ENCODE measurements at regions of chr19 and their contacts with region 1.

Region 1: DNA sequence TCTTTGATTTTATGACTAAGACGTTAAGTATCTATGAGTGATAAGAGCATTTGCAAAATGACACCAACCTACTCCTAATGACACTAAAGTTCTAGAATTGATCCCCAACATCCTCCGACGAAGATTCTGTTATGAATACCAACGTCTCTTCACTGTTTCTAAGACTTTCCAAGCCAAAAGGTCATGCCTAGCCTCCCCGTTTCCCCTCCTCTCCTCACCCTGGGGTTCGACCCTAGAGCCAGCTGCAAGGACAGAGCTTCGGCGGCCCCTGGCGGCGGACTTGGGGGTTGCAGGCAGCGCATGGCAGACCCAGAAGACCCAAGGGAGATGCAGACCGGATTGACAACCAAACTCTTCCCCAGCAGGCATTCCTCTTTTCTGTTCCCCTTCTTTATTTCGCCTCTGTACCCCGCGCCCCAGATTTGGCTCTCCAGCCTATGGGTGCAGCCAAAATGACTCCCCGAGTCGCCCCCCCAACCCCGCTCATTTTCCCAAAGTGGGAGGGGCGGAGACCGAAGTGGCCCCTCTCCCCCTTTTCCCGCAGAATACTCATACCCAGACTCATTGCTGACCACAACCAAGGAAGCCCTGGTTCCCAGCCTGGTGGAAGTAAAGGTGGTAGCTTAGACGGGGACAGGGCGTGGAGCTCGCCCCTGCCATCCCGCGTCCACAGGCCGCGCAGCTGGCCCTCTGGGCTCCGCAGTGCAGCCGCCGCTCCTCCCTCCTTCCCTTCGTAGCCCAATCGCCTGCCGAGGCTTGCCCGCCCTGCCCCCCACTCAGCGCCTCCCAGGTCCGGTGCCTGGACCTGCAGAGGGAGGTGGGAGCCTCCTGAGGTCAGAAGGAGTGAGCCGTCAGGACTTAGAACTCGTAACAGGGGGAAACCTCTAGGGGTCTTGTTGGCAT is 4.1 kb upstream of the EML2 start:
- DNase-seq: peak; percentile 84 to 98 (median 93)

Region 2: GRCh38 chr19:45607071-45608029 is 35.9 kb before region 1 on chr19:
- intact Hi-C with region 1: loop called (anchors 1 kb)
- DNase-seq: peak; percentile 20 to 91 (median 64)

Region 3: DNA sequence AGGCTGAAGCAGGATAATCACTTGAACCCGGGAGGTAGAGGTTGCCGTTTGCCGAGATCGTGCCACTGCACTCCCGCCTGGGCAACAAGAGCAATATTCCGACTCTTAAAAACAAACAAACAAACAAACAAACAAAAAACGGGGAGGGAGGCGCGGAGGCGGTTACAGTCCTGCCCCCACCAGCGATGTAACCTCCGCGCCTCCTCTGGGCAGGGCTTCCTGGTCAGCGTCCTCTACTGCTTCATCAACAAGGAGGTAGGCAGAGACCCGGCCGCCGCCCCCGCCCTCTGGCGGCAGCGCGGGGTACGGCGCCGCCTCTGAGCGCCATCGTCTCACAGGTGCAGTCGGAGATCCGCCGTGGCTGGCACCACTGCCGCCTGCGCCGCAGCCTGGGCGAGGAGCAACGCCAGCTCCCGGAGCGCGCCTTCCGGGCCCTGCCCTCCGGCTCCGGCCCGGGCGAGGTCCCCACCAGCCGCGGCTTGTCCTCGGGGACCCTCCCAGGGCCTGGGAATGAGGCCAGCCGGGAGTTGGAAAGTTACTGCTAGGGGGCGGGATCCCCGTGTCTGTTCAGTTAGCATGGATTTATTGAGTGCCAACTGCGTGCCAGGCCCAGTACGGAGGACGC is 38.2 kb after region 1 on chr19:
- intact Hi-C with region 1: loop called (anchors 5 kb)
- DNase-seq: peak; percentile 77 to 99 (median 84)